ENCODE measurements at regions of chr18 and their contacts with region 1.

Region 1: GRCh38 chr18:44594799-44595467 is 85.8 kb upstream of the SETBP1 start:
- DNase-seq: no peak
- H3K4me3 ChIP-seq: no peak overlapping the region
- H3K27ac ChIP-seq: no peak overlapping the region
- H3K4me1 ChIP-seq: no peaks in the 10 kb centered on the region
- H3K27me3 ChIP-seq: no peaks in the 10 kb centered on the region
- CTCF ChIP-seq: no peak
- POLR2A ChIP-seq: no peak

Region 2: DNA sequence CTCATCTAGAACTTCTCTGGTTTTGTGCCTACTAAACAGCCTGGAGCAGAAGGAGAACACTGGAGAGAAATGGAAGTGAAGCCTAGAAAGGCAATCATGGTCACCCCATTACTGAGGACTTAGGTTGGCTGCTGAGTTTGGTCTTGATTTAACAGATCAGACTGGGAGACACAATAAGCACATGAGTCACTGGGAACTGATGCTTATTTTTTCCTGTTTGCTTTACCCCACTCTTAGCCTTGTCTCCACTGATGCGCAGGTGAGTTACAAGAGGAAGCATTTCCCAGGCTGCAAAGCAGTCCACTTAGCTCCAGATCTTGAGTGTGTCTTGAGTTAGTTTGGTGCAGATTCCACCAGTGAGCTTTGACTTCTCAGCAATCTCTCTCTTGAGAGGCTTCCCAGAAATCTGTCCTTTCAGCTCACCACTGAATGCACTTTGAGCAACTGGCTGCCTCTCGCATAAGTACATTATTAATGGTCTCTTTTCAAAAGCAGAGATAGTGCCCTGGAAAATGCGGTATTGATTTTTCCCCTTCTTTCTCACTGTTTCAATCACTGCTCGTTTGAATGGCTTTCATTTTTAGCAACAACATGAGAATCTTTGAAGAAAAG is 304.5 kb before region 1 on chr18:
- intact Hi-C with region 1: no loop called
- DNase-seq: no peak
- H3K4me3 ChIP-seq: no peak overlapping the region
- H3K27ac ChIP-seq: no peak overlapping the region
- H3K4me1 ChIP-seq: no peaks in the 10 kb centered on the region
- H3K27me3 ChIP-seq: no peaks in the 10 kb centered on the region
- CTCF ChIP-seq: no peak
- POLR2A ChIP-seq: no peak

Region 3: DNA sequence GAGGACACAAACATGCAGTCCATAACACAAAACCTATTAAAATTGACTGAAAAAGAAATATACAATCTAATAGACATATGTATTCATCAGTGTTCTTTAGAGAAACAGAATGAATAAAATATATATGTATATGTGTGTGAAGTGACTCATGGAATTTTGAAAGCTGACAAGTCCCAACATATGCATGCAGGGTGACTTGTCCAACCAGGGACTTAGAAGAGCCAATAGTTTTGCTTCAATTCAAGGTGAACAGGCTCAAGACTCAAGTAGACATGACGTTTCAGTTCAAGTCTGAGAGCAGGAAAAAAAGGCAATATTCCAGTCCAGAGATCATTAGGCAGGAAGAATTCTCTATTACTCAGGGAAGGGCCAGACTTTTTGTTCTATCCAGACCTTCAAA is 185.4 kb before region 1 on chr18:
- intact Hi-C with region 1: loop called (anchors 5 kb)
- DNase-seq: no peak
- H3K4me3 ChIP-seq: no peak overlapping the region
- H3K27ac ChIP-seq: no peak overlapping the region
- H3K4me1 ChIP-seq: no peaks in the 10 kb centered on the region
- H3K27me3 ChIP-seq: no peaks in the 10 kb centered on the region
- CTCF ChIP-seq: no peak
- POLR2A ChIP-seq: no peak

Region 4: DNA sequence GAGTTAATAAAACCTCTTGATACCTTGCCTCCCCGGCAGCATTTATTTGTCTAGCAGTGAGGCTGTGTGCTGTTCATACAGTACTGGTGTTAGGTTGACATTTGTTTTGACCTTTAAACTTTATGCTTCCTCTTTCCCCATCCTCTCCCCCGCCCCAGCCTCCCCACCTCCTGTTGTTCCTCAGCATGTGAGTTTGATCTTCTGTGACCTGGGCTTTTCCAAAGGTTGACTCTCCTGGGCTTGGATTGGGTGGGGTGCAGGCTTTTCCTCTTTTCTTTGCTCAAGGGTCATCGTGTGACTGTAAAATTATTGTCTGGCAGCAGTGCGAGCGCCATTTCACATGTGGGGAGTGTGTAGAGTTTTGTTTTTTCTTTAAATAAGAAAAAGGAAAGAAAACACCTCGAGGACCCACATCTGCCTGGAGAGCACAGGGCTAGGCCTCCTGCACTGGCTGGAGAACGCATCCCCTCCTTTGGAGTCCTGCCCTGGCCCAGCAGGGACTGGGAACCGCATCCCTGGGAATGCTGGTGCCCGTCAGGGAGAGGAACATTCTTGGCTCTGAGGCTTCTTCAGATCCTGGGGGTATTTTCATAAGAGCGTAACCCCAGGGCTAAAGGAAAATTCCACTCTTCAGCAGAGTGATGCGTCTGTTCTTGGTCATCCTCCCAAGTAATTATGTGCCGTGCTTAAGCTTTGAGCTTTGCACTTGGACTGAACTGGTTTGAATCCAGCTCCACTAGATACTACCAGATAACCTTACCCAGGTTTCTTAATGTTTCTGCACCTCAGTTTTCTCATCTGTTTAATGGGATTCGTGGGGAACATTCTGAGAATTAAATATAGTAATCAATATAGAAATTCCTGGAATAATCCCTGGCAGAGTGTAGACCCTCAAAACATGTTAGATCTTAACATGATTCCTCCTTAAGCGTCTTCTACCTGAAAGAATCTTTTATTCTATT is 177.3 kb after region 1 on chr18:
- intact Hi-C with region 1: no loop called
- DNase-seq: peak; percentile 34 to 42
- H3K4me3 ChIP-seq: no peak overlapping the region
- H3K27ac ChIP-seq: peak overlapping the region; percentile 58 to 69
- H3K4me1 ChIP-seq: no peaks in the 10 kb centered on the region
- H3K27me3 ChIP-seq: no peaks in the 10 kb centered on the region
- CTCF ChIP-seq: no peak
- POLR2A ChIP-seq: no peak